ENCODE measurements at regions of chr3 and their contacts with region 1.

Region 1: DNA sequence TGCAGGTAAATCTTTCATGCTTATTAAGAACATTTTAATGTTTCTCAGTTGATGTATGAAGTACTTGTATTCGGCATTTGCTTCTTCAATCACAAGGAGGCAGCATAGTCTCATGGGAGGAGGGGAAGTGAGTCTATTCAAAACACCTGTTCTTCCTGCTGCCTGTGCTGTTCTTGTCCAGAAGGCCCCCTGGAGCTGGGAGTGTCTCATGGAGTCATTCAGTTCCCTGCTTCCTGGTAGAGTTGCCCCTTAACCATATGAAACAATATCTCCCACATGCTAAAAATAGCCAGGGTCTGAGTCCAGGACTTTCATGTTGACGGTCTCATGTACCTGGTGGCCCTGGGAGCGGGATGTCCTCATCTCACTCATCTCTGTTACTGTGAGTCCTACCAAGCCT is 15.5 kb upstream of the PPP1R2 start:
- DNase-seq: no peak
- H3K4me3 Mint-ChIP-seq: no peak overlapping the region
- H3K27ac Mint-ChIP-seq: no peak overlapping the region
- H3K4me1 Mint-ChIP-seq: peaks cover 27% of the 10 kb centered on the region
- H3K27me3 Mint-ChIP-seq: no peaks in the 10 kb centered on the region

Region 2: DNA sequence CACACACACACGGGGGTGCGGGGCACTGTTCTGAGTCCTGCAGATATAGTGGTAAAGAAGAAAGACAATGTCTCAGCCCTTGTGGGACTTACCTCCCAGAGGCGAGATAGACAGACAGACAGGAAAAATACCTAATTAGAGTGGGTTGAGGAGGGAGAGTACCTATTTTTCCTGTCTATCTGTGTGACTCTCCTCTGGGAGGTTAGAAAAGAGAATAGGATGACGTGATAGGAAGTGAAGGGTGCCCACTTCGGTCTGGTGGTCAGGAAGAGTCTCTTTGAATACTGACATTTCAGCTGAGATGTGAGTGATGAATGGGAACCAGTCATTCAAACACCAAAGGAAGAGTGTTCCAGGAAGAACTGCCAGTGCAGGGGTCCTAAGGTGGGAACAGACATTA is 29.2 kb after region 1 on chr3:
- intact Hi-C with region 1: loop called (anchors 2 kb)
- DNase-seq: no peak
- H3K4me3 Mint-ChIP-seq: no peak overlapping the region
- H3K27ac Mint-ChIP-seq: no peak overlapping the region
- H3K4me1 Mint-ChIP-seq: peaks cover 8% of the 10 kb centered on the region
- H3K27me3 Mint-ChIP-seq: no peaks in the 10 kb centered on the region

Region 3: DNA sequence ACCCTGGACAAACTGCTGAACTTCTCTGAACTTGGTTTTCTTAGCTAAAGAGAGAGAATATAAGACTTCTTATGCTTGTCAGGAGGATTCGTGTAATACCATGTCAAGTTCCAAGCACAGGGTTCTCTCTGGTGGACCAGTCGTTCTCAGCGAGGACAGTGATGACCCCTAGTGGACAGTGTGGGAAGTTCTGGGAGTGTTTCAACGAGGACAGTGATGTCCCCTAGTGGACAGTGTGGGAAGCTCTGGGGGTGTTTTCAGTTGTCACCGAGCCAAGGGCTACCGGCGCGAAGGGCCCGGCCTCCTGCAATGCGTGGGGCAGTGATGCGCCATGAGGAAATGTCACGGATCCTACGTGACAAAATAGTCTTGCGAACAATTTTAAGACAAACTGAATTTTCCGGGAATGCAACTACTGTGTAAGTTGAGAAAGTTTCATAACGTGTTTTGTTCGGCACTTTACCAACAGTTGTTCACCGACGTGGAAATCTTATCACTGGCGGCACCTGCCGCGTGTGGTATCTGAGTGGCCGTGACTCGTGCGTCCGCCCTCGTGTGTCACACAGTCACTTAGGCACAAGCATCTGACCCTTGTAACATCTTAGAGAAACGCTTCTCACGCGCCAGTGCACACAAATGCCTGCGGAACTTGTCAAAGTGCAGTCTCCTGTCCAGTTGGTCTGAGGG is 292.4 kb after region 1 on chr3:
- intact Hi-C with region 1: loop called (anchors 2 kb)
- DNase-seq: peak; percentile 82
- H3K4me3 Mint-ChIP-seq: no peak overlapping the region
- H3K27ac Mint-ChIP-seq: no peak overlapping the region
- H3K4me1 Mint-ChIP-seq: peaks cover 14% of the 10 kb centered on the region
- H3K27me3 Mint-ChIP-seq: no peaks in the 10 kb centered on the region